Activated naive CD4-positive, alpha-beta T cell treated with anti-CD3 and anti-CD28 coated beads, Interleukin-2, amount 10 ng/mL, durations not matched to agents 7 days and 5 days (primary cell): ENCODE measurements at regions of chr16 and their contacts with region 1.

Region 1: GRCh38 chr16:56964243-56965148 is 2.7 kb downstream of the CETP start:
- DNase-seq: peak; percentile 97
- H3K4me3 Mint-ChIP-seq: no peak overlapping the region
- H3K27ac Mint-ChIP-seq: peak overlapping the region; percentile 31
- H3K4me1 Mint-ChIP-seq: peaks cover 23% of the 10 kb centered on the region
- H3K27me3 Mint-ChIP-seq: peaks cover 19% of the 10 kb centered on the region

Region 2: DNA sequence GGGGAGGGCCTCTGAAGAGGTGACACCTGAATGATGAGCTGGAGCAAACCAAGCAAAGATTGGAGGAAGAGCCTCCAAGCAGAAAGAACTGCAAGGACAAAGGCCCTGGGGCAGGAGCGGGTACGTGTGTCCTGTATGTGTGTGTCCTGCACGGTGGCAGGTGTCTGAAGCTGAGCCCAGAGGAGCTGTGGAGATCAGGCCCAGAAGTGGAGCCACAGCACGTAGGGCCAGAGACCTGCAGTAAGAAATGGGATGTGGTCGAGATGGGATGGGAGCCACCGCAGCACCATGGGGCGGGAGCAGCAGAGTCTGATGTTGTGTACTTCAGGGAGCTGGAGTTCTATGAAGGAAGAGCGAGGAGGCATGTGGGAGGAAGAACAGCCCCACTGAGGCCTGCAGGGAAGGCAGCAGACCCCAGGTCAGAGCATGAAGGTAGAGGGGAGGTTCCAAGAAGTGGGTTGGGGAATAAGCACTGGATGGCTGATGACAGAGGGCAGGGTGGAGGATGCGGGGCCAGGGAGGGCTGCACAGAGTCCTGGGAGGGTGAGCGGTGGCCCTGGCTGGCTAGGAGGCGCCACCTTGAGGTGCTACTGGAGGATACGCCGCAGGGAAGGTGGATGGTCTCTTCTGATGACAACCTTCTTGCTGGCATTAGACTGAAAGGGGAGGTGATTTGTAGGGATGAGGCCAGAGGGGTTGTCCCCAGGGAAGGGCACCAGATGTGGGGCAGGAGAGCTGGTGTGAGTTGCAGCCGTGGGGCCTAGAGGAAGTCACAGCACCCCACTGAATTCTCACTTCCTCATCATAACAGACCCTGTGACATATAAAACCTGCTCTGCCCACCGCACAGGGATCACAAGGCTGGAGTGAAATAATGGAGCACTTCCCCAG is 13.4 kb before region 1 on chr16:
- CTCF ChIA-PET with region 1: interaction called, 32 read pairs
- DNase-seq: peak; percentile 75
- H3K4me3 Mint-ChIP-seq: no peak overlapping the region
- H3K27ac Mint-ChIP-seq: no peak overlapping the region
- H3K4me1 Mint-ChIP-seq: peaks cover 19% of the 10 kb centered on the region
- H3K27me3 Mint-ChIP-seq: no peaks in the 10 kb centered on the region

Region 3: GRCh38 chr16:56977216-56977615 is 12.7 kb after region 1 on chr16:
- CTCF ChIA-PET with region 1: interaction called, 19 read pairs
- DNase-seq: no peak
- H3K4me3 Mint-ChIP-seq: no peak overlapping the region
- H3K27ac Mint-ChIP-seq: peak overlapping the region; percentile 37
- H3K4me1 Mint-ChIP-seq: peaks cover 46% of the 10 kb centered on the region
- H3K27me3 Mint-ChIP-seq: peaks cover 5% of the 10 kb centered on the region

Region 4: GRCh38 chr16:57045694-57046381 is 81.3 kb after region 1 on chr16:
- CTCF ChIA-PET with region 1: interaction called, 69 read pairs
- DNase-seq: no peak
- H3K4me3 Mint-ChIP-seq: no peak overlapping the region
- H3K27ac Mint-ChIP-seq: peak overlapping the region; percentile 38
- H3K4me1 Mint-ChIP-seq: peaks cover 39% of the 10 kb centered on the region
- H3K27me3 Mint-ChIP-seq: no peaks in the 10 kb centered on the region

Region 5: GRCh38 chr16:57084257-57084770 is 119.8 kb after region 1 on chr16:
- CTCF ChIA-PET with region 1: interaction called, 29 read pairs
- DNase-seq: peak; percentile 81
- H3K4me3 Mint-ChIP-seq: no peak overlapping the region
- H3K27ac Mint-ChIP-seq: peak overlapping the region; percentile 70
- H3K4me1 Mint-ChIP-seq: peaks cover 8% of the 10 kb centered on the region
- H3K27me3 Mint-ChIP-seq: peaks cover 16% of the 10 kb centered on the region

Region 6: DNA sequence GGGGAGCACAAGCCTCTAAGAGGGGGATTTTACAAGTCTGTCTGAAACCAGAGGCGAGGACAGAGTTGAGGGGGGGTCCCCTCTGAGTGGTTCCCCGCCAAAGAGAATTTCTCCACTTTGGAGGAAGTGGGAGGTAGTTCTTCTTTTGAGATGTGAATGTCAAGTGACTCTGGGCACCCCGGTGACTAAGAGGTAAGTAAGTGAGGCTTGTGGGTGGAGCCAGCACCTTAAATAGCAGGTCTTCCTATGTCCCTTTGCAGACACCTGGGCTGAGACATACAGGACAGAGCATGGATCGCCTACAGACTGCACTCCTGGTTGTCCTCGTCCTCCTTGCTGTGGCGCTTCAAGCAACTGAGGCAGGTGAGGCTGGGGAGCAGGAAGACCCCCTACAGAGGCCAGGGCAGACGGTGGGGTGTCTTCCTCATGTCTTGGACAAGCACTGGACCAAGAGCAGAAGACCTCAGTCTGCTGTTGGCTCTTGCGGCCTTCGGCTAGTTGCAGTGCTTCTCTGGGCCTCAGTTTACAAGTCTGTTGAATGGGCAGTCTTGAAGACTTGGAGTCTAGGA is 394.1 kb after region 1 on chr16 and contains the start of gene CCL22:
- CTCF ChIA-PET with region 1: no interaction called
- DNase-seq: no peak
- H3K4me3 Mint-ChIP-seq: no peak within 1 kb of the TSS
- H3K27ac Mint-ChIP-seq: peak within 1 kb of the TSS; percentile 53
- H3K4me1 Mint-ChIP-seq: no peaks in the 10 kb centered on the region
- H3K27me3 Mint-ChIP-seq: peaks cover 18% of the 10 kb centered on the region